Naive thymus-derived CD4-positive, alpha-beta T cell (primary cell): ENCODE measurements at regions of chr20 and their contacts with region 1.

Region 1: GRCh38 chr20:44997171-44998067 is 31.1 kb downstream of the STK4 start:
- DNase-seq: no peak
- ATAC-seq: no peak
- H3K4me3 ChIP-seq: no peak overlapping the region
- H3K4me3 Mint-ChIP-seq: no peak overlapping the region
- H3K27ac ChIP-seq: peak overlapping the region; percentile 39
- H3K27ac Mint-ChIP-seq: peak overlapping the region; percentile 20 to 82 (median 74)
- H3K4me1 ChIP-seq: peaks cover 7 to 34% of the 10 kb centered on the region in 2 donors
- H3K4me1 Mint-ChIP-seq: peaks cover 41 to 89% (median 79%) of the 10 kb centered on the region in 7 donors
- H3K27me3 ChIP-seq: no peaks in the 10 kb centered on the region
- H3K27me3 Mint-ChIP-seq: no peaks in the 10 kb centered on the region

Region 2: GRCh38 chr20:45020236-45020886 is 22.9 kb after region 1 on chr20:
- CTCF ChIA-PET with region 1: interaction called, 3 read pairs
- POLR2A ChIA-PET with region 1: no interaction called
- intact Hi-C with region 1: loop called in 1 of 2 experiments (anchors 2 kb)
- DNase-seq: no peak
- ATAC-seq: no peak
- H3K4me3 ChIP-seq: no peak overlapping the region
- H3K4me3 Mint-ChIP-seq: peak overlapping the region in 2 of 10 donors; percentile 35 to 37
- H3K27ac ChIP-seq: no peak overlapping the region
- H3K27ac Mint-ChIP-seq: peak overlapping the region in 6 of 9 donors; percentile 29 to 91 (median 58)
- H3K4me1 ChIP-seq: peaks cover 15 to 20% of the 10 kb centered on the region in 2 donors
- H3K4me1 Mint-ChIP-seq: peaks cover 22 to 92% (median 85%) of the 10 kb centered on the region in 7 donors
- H3K27me3 ChIP-seq: no peaks in the 10 kb centered on the region
- H3K27me3 Mint-ChIP-seq: no peaks in the 10 kb centered on the region